GM18951 (cell line): ENCODE measurements at regions of chr14 and their contacts with region 1.

Region 1: DNA sequence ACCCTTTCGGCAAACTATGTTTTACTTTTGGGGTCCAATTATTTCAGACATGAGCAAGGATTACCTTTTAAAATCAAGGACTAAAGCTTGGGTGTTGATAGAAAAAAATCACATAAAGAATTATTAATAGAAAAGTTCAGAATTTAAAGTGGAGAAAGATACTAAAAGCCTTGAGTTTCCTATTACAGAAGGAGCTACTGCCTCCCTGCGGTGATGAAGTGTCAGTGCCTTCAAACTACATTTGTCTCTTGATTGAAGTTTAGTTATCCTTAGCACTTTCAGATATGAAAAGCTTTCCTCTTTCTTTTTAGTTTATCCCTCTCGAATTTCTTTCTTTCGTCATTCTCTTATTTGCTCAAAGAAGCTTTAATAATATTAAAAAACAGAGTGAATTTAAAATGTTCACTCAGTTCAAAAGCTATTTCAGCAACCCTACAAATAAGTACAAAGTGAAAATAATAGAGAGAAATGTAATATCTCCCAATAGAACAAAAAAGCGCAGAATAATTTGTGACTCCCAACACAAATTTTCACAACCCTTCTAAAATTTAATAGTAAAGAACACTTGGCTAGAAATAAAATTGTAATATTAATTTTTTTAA is 87.6 kb downstream of the SEC23A start:
- POLR2A ChIP-seq: no peak

Region 2: DNA sequence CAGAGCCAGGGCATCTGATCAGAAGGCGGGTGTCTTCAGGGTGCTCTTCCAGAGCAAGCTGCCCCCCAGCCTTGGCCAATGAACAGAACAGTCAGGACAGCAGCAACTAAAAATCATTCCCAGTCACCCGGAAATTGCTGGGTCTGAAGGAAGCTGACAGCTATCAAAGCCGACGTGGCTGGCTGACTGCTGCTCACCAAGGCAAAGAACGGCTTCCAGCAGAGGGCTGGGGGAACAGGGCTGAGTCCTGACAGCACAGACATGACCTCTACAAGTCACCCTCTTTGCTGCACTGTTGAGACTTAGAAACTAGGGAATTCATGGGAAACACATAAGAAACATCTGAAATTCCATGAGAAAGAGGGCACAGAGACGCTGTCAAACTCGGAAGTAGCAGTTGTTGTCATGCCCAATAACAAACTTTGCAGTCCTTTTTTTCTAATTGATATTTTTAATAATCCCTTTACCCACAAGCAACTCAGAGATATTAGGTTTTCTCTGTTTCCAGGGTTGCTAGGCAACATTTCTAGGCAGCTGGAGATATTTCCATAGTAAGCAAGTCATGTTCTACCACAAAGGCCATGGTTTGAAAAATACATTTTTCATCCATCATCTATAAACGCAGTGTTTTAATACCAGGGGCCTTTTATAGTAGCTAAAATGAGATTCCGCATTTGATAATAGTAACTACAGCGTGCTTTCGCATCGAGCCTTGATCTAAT is 277.6 kb before region 1 on chr14:
- in situ Hi-C with region 1: loop called (anchors 25 kb)
- POLR2A ChIP-seq: no peak

Region 3: GRCh38 chr14:39499514-39499913 is 484.1 kb after region 1 on chr14:
- in situ Hi-C with region 1: no loop called
- POLR2A ChIP-seq: no peak